K562 (cell line): ENCODE measurements at regions of chr7 and their contacts with region 1.

Region 1: GRCh38 chr7:100081535-100082102 is at the start of gene ZNF3:
- DNase-seq: peak; percentile 92 to 100 (median 95)
- ATAC-seq: peak; percentile 92
- H3K4me3 ChIP-seq: peak within 1 kb of the TSS; percentile 67
- H3K27ac ChIP-seq: peak within 1 kb of the TSS; percentile 90
- H3K4me1 ChIP-seq: peaks cover 10 to 26% of the 10 kb centered on the region in 2 experiments; a peak in 4 of 5 replicates
- H3K27me3 ChIP-seq: no peaks in the 10 kb centered on the region
- CTCF ChIP-seq: peak; percentile 94 to 96 (median 95)
- EP300 ChIP-seq: peak; percentile 79
- POLR2A ChIP-seq: peak; percentile 84
- RAD21 ChIP-seq: peak; percentile 86 to 91
- polyA plus RNA-seq, gene ZNF3: 30.0 to 51.5 TPM

Region 2: GRCh38 chr7:99910976-99911375 is 170.6 kb before region 1 on chr7:
- CTCF ChIA-PET with region 1: interaction called, 8 read pairs
- POLR2A ChIA-PET with region 1: no interaction called
- in situ Hi-C with region 1: no loop called
- intact Hi-C with region 1: loop called (anchors 1 kb)
- DNase-seq: no peak
- ATAC-seq: no peak
- H3K4me3 ChIP-seq: no peak overlapping the region
- H3K27ac ChIP-seq: no peak overlapping the region
- H3K4me1 ChIP-seq: no peaks in the 10 kb centered on the region
- H3K27me3 ChIP-seq: no peaks in the 10 kb centered on the region
- CTCF ChIP-seq: no peak
- EP300 ChIP-seq: no peak
- POLR2A ChIP-seq: no peak
- RAD21 ChIP-seq: no peak

Region 3: DNA sequence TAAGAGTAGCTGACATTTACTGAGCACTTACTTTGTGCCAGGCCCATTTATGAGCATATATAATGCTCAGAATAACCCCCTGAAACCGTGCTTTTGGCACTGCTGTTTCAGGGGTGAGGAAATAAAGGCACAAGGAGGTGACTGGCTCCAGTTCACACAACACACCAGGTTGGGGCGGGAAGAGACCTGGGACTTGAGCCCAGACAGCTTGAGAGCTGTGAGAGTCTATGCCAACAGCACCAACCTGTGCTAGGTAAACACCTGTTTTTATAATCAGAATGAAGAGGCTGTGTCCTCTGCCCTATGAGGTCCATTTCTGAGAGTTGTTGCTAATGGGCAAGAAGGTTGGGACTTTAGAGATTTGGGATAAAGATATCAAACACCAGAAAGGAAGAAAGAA is 97.0 kb before region 1 on chr7:
- CTCF ChIA-PET with region 1: no interaction called
- POLR2A ChIA-PET with region 1: no interaction called
- in situ Hi-C with region 1: no loop called
- intact Hi-C with region 1: no loop called
- DNase-seq: no peak
- ATAC-seq: no peak
- H3K4me3 ChIP-seq: no peak overlapping the region
- H3K27ac ChIP-seq: no peak overlapping the region
- H3K4me1 ChIP-seq: peaks cover under 1% of the 10 kb centered on the region in 2 experiments; a peak in 2 of 5 replicates
- H3K27me3 ChIP-seq: peaks cover 31 to 68% of the 10 kb centered on the region in 2 experiments
- CTCF ChIP-seq: no peak
- EP300 ChIP-seq: no peak
- POLR2A ChIP-seq: no peak
- RAD21 ChIP-seq: no peak

Region 4: GRCh38 chr7:99997545-99998137 is 84.0 kb before region 1 on chr7:
- CTCF ChIA-PET with region 1: no interaction called
- POLR2A ChIA-PET with region 1: no interaction called
- in situ Hi-C with region 1: no loop called
- intact Hi-C with region 1: loop called (anchors 1 kb)
- DNase-seq: no peak
- ATAC-seq: no peak
- H3K4me3 ChIP-seq: no peak overlapping the region
- H3K27ac ChIP-seq: no peak overlapping the region
- H3K4me1 ChIP-seq: peaks cover 2 to 13% of the 10 kb centered on the region in 2 experiments; a peak in 3 of 5 replicates
- H3K27me3 ChIP-seq: peaks cover 25 to 40% of the 10 kb centered on the region in 2 experiments; a peak in 4 of 5 replicates
- CTCF ChIP-seq: no peak
- EP300 ChIP-seq: no peak
- POLR2A ChIP-seq: no peak
- RAD21 ChIP-seq: no peak

Region 5: DNA sequence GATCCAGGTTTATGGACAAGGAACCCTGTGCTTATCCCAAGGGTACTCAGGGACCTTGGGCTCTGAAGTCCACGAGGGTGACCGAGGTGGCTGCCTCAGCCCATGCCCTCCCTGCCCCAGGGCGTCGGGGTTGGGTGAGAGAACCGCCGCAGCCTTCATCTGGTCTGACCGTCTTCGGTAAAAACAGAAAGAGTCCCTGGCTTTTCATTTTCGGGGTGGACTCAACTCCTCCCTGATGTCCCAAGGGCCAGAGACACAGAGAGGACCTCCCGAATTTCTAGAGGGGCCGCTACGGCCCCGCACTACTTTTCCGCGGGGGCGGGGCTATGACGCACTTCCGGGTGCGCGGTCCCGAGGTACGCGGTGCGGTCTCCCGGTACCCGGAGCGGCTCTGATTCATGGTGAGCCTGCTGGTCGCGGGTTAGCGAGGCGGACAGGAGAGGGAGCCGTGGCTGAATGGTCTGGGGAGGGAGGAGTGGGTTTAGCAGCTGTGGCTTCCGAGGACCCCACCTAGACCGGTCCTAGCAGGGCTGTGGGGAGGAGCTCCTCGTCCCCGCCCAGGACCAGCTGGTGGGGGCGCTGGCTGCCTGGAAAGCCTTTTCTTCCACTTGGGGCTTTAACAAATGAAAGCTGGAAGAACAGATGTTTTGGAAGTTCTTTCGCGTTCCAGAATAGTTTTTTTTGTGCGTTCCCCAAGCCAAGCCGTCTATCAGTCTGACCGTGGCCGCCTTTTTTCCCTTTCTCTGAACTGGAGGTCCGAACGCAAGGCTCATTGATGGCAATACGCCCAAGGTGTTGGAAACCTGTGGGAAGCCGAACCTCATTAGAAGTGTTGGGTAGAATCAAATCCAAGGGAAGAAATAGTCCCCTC is 31.9 kb before region 1 on chr7 and contains the start of gene ZSCAN21:
- CTCF ChIA-PET with region 1: no interaction called
- POLR2A ChIA-PET with region 1: no interaction called
- in situ Hi-C with region 1: no loop called
- intact Hi-C with region 1: loop called (anchors 2 kb)
- DNase-seq: peak; percentile 93 to 97 (median 96)
- ATAC-seq: peak; percentile 96
- H3K4me3 ChIP-seq: peak within 1 kb of the TSS; percentile 88
- H3K27ac ChIP-seq: peak within 1 kb of the TSS; percentile 77
- H3K4me1 ChIP-seq: peaks cover 3 to 14% of the 10 kb centered on the region in 2 experiments; a peak in 3 of 5 replicates
- H3K27me3 ChIP-seq: no peaks in the 10 kb centered on the region
- CTCF ChIP-seq: peak; percentile 28 to 41 (median 34); a peak in 5 of 6 replicates
- EP300 ChIP-seq: peak; percentile 46
- POLR2A ChIP-seq: peak; percentile 95
- RAD21 ChIP-seq: peak in 1 of 2 experiments; percentile 29; a peak in 1 of 4 replicates
- polyA plus RNA-seq, gene ZSCAN21: 5.9 to 6.9 TPM

Region 6: DNA sequence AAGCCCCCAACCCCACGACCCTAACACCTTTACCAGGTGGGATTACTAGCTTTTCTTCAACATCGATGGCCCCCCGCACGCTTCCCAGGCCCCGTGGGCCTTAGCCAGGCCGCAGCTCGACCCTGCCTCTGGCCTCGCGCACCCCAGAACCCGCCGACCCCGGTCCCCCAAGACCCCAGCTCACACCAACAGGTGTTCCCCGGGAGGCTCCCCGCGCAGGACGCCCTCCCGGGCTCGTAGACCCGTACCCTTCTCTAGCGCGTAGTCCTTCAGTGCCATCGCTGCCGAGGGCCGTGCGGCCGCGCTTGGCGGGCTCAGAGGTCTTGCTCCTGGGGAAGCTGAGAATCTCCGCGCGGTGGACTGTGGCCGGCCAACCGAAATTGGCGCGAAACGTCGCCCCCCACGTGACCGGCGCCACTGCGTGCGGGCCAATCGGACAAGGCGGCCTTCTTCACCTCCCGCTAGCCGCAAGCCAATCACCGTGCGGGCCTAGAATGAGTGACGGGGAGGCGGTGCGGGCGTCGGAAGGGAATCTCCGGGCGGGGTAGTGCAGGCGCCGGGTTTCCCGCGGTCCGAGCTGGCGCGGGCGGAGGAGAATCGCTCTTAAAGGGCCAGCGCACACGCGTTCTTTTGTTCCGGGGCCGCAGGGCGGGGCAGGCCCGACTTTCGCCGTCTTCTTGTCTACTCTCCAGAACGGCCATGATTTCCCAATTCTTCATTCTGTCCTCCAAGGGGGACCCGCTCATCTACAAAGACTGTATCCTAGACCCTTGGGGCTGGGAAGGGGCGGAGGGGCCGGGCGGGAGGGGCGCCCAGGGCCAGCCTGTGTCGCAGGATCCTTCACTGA is 19.6 kb after region 1 on chr7 and contains the starts of genes AP4M1 and MCM7:
- CTCF ChIA-PET with region 1: no interaction called
- POLR2A ChIA-PET with region 1: interaction called, 115 read pairs
- in situ Hi-C with region 1: no loop called
- intact Hi-C with region 1: loop called (anchors 1 kb)
- DNase-seq: peak; percentile 98 to 100 (median 99)
- ATAC-seq: peak; percentile 95
- H3K4me3 ChIP-seq: peak within 1 kb of the TSS; percentile 98
- H3K27ac ChIP-seq: peak within 1 kb of the TSS; percentile 100
- H3K4me1 ChIP-seq: peaks cover 9 to 35% of the 10 kb centered on the region in 2 experiments; a peak in 4 of 5 replicates
- H3K27me3 ChIP-seq: no peaks in the 10 kb centered on the region
- CTCF ChIP-seq: peak in 1 of 3 experiments; percentile 7; a peak in 1 of 6 replicates
- EP300 ChIP-seq: peak; percentile 15
- POLR2A ChIP-seq: peak; percentile 96
- RAD21 ChIP-seq: no peak
- polyA plus RNA-seq, gene AP4M1: 1.3 to 3.6 TPM
- polyA plus RNA-seq, gene MCM7: 407 to 856 TPM

Region 7: DNA sequence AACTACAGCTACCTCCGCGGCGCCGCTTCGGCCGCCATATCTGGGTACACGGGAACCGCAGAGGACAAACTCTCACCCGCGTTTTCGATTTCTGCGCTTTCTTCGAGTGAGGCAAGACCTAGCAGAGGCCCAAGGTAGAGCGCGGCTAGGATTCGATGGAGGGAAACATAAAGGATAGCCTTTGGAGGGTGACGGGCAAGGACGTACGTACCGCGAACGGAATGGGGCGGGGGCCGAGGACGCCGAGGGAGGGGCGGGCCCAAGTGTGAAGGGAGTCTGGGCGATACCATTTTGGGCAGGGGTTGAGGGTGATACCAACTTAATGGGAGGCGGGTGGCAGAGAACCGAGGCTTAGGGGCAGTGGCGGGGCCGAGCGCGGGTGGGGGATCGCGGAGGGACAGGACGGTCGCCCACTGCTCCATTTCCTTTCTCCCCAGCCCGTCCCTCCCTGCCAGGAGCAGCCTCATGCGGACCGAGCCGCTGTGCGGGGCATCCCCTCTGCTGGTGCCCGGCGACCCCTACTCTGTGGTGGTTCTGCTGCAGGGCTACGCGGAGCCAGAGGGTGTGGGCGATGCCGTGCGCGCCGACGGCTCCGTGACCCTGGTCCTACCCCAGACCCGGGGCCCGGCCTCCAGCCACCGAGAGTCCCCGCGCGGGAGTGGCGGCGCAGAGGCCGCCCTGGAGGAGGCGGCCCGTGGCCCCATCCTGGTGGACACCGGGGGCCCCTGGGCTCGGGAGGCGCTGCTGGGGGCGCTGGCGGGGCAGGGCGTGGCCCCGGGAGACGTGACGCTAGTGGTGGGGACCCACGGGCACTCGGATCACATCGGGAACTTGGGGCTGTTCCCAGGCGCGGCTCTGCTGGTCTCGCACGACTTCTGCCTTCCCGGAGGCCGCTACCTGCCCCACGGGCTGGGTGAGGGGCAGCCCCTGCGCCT is 45.6 kb after region 1 on chr7 and contains the start of gene MBLAC1:
- CTCF ChIA-PET with region 1: interaction called, 4 read pairs
- POLR2A ChIA-PET with region 1: interaction called, 5 read pairs
- in situ Hi-C with region 1: no loop called
- intact Hi-C with region 1: loop called (anchors 2 kb)
- DNase-seq: peak; percentile 90 to 96 (median 94)
- ATAC-seq: peak; percentile 70
- H3K4me3 ChIP-seq: peak within 1 kb of the TSS; percentile 74
- H3K27ac ChIP-seq: peak within 1 kb of the TSS; percentile 97
- H3K4me1 ChIP-seq: peaks cover 35 to 60% of the 10 kb centered on the region in 2 experiments
- H3K27me3 ChIP-seq: no peaks in the 10 kb centered on the region
- CTCF ChIP-seq: peak in 1 of 3 experiments; percentile 25; a peak in 1 of 6 replicates
- EP300 ChIP-seq: 0 out of 2 replicates have a peak, but pooled peaks have one; percentile 7
- POLR2A ChIP-seq: peak; percentile 92
- RAD21 ChIP-seq: no peak
- polyA plus RNA-seq, gene MBLAC1: 0.03 TPM